Natural killer cell (primary cell): ENCODE measurements at regions of chr13 and their contacts with region 1.

Region 1: GRCh38 chr13:51452361-51453206 is at the start of gene INTS6:
- DNase-seq: peak; percentile 99
- ATAC-seq: peak; percentile 78 to 94 (median 81)
- H3K4me3 ChIP-seq: peak within 1 kb of the TSS; percentile 85
- H3K4me3 Mint-ChIP-seq: peak within 1 kb of the TSS; percentile 94
- H3K27ac ChIP-seq: peak within 1 kb of the TSS; percentile 96
- H3K27ac Mint-ChIP-seq: peak within 1 kb of the TSS; percentile 92 to 96
- H3K4me1 ChIP-seq: peaks cover 9% of the 10 kb centered on the region
- H3K4me1 Mint-ChIP-seq: peaks cover 45 to 48% of the 10 kb centered on the region in 2 donors
- H3K27me3 ChIP-seq: no peaks in the 10 kb centered on the region
- H3K27me3 Mint-ChIP-seq: no peaks in the 10 kb centered on the region
- CTCF ChIP-seq: no peak
- total RNA-seq, gene INTS6: 89.2 to 142 (median 110) TPM

Region 2: GRCh38 chr13:49936085-49936940 is 1516.3 kb before region 1 on chr13 and contains the start of gene SPRYD7:
- intact Hi-C with region 1: loop called (anchors 5 kb)
- DNase-seq: peak; percentile 96 to 97
- ATAC-seq: peak; percentile 95 to 99 (median 97)
- H3K4me3 ChIP-seq: peak within 1 kb of the TSS; percentile 64
- H3K4me3 Mint-ChIP-seq: peak within 1 kb of the TSS; percentile 93
- H3K27ac ChIP-seq: peak within 1 kb of the TSS; percentile 46
- H3K27ac Mint-ChIP-seq: peak within 1 kb of the TSS; percentile 79 to 91
- H3K4me1 ChIP-seq: peaks cover 14% of the 10 kb centered on the region
- H3K4me1 Mint-ChIP-seq: peaks cover 17 to 20% of the 10 kb centered on the region in 2 donors
- H3K27me3 ChIP-seq: no peaks in the 10 kb centered on the region
- H3K27me3 Mint-ChIP-seq: no peaks in the 10 kb centered on the region
- CTCF ChIP-seq: peak; percentile 78
- total RNA-seq, gene SPRYD7: 3.0 to 6.2 (median 4.4) TPM

Region 3: DNA sequence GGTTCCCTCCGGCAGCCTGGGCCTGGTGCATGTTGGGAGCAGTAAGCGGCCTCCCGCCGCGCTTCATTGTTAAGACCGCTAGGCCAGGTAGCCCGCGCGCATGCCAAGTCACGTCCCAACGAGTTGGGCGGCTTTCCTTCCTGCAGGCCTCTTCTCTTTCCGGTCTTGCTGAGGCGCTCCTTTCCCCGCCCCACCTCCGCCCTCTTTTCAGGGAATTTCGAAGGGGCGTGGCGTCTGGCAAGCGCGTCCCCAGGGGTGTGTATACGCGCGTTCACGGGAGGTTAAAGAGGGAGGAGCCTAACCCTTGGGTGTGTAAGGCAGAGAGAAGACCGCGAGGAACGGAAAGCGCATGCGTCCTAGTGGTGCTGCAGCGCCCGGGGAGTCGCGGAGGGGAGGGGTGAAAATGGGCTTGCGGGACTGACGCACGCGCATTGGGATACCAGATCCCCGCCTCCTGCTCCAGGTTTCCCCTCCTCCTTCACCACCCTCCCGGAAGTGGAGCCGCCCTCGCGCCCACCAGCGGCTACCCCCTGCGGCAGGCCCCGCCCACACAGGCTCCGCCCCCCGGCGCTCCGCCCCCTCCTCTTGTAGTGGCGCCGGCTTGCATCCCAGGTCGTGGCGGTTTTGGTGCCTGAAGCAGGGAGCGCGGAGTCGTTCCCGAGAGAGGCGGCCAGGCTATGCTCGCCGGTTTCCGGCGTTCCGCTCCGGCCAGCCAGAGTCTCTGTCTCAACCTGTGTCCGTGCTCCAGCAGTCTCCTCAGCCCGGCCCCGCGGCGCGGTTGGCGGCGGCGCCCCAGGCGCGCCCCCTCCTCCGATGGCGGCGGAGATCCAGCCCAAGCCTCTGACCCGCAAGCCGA is 131.5 kb after region 1 on chr13 and contains the start of gene WDFY2:
- intact Hi-C with region 1: loop called (anchors 1 kb)
- DNase-seq: peak; percentile 99 to 100
- ATAC-seq: peak; percentile 82 to 95 (median 84)
- H3K4me3 ChIP-seq: peak within 1 kb of the TSS; percentile 83
- H3K4me3 Mint-ChIP-seq: peak within 1 kb of the TSS; percentile 94
- H3K27ac ChIP-seq: peak within 1 kb of the TSS; percentile 86
- H3K27ac Mint-ChIP-seq: peak within 1 kb of the TSS; percentile 88 to 90
- H3K4me1 ChIP-seq: peaks cover 10% of the 10 kb centered on the region
- H3K4me1 Mint-ChIP-seq: peaks cover 26 to 35% of the 10 kb centered on the region in 2 donors
- H3K27me3 ChIP-seq: no peaks in the 10 kb centered on the region
- H3K27me3 Mint-ChIP-seq: no peaks in the 10 kb centered on the region
- CTCF ChIP-seq: no peak
- total RNA-seq, gene WDFY2: 29.5 to 32.1 (median 31.3) TPM

Region 4: DNA sequence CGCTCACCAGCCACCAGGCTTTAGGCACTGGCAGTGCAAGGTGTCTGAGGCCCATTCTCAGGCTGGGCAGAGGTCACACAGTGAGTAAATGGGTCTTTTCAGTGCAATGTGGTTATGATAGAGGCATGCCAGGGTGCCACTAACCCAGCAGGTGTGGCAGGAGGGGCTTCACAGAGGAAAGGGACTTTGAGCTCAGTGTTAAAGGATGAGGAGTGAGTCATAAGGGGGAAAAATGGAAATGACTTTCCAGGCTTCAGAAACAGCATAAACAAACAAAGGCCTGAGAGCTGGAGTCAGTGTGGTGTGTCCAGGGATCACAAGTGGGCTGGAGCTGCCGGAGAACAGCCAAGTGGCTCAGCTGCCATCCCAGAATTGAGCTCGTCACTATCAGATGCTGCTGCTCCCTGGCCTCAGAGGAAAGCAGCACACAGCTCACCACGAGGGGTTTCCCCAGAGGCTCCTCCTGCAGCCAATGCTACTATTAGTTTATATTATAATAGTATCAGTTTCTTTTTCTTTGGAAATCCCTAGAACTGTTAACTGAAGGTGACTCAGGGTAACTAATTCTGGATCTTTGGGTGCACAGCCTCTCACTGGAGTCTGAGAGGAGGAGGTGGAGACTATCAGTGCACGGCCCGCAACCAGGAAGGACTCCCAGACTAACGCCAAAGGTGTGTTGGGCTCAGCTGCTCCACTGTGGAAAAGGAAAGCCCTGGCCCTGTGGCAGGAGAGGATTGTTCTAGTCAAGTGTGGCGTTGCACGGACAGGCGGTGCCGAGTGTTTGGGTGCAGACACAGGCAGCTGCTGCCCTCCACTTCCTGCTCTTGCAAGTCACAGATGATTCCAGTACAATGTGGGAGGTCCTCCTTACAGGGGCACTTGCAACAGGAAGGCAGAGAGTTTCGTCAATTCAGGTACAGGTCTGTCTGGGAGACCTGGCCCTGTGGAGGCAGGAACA is 311.9 kb after region 1 on chr13:
- intact Hi-C with region 1: loop called (anchors 2 kb)
- DNase-seq: peak; percentile 52 to 81
- ATAC-seq: peak; percentile 86 to 93 (median 92)
- H3K4me3 ChIP-seq: no peak overlapping the region
- H3K4me3 Mint-ChIP-seq: peak overlapping the region; percentile 70
- H3K27ac ChIP-seq: peak overlapping the region; percentile 57
- H3K27ac Mint-ChIP-seq: peak overlapping the region; percentile 79 to 95
- H3K4me1 ChIP-seq: peaks cover 13% of the 10 kb centered on the region
- H3K4me1 Mint-ChIP-seq: peaks cover 16 to 17% of the 10 kb centered on the region in 2 donors
- H3K27me3 ChIP-seq: no peaks in the 10 kb centered on the region
- H3K27me3 Mint-ChIP-seq: no peaks in the 10 kb centered on the region
- CTCF ChIP-seq: no peak

Region 5: GRCh38 chr13:52652196-52652979 is 1199.8 kb after region 1 on chr13 and contains the start of gene SUGT1:
- intact Hi-C with region 1: loop called (anchors 5 kb)
- DNase-seq: peak; percentile 82 to 98
- ATAC-seq: peak; percentile 87 to 97 (median 91)
- H3K4me3 ChIP-seq: peak within 1 kb of the TSS; percentile 57
- H3K4me3 Mint-ChIP-seq: no peak within 1 kb of the TSS
- H3K27ac ChIP-seq: peak within 1 kb of the TSS; percentile 88
- H3K27ac Mint-ChIP-seq: no peak within 1 kb of the TSS
- H3K4me1 ChIP-seq: peaks cover 5% of the 10 kb centered on the region
- H3K4me1 Mint-ChIP-seq: peaks cover 8 to 14% of the 10 kb centered on the region in 2 donors
- H3K27me3 ChIP-seq: no peaks in the 10 kb centered on the region
- H3K27me3 Mint-ChIP-seq: no peaks in the 10 kb centered on the region
- CTCF ChIP-seq: peak; percentile 57
- total RNA-seq, gene SUGT1: 27.4 to 34.4 (median 29.7) TPM